GM10248 (cell line): ENCODE measurements at regions of chr14 and their contacts with region 1.

Region 1: GRCh38 chr14:66254038-66254437 is 232.1 kb upstream of the CCDC196 start:
- DNase-seq: no peak
- CTCF ChIP-seq: no peak

Region 2: DNA sequence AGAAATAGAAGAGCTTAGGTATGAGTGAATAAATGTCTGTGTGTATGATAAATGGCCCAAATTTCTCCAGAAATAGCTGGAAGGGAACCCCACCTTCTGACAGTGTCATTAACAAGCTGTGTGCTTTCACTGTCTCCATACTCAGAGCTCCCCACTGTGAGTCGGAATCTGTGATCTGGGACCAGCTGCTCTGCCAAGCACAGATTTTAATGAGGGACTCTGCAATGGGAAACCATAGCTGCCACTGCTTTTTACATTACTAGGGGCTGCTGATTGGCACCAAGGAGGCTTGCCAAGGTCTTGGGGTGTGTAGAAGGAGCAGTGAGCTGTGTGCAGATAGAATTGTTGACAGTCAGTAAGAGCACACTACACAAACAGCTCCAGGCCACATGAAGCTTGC is 12.0 kb before region 1 on chr14:
- CTCF ChIA-PET with region 1: interaction called, 17 read pairs
- POLR2A ChIA-PET with region 1: no interaction called
- DNase-seq: no peak
- CTCF ChIP-seq: no peak